SK-N-SH (cell line): ENCODE measurements at regions of chr13 and their contacts with region 1.

Region 1: GRCh38 chr13:75372517-75372916 is 109.5 kb downstream of the TBC1D4 start:
- DNase-seq: peak; percentile 42
- H3K4me3 ChIP-seq: no peak overlapping the region
- H3K27ac ChIP-seq: no peak overlapping the region
- H3K4me1 ChIP-seq: peaks cover 4 to 11% of the 10 kb centered on the region in 2 experiments
- H3K27me3 ChIP-seq: no peaks in the 10 kb centered on the region
- CTCF ChIP-seq: peak; percentile 82
- EP300 ChIP-seq: no peak
- RAD21 ChIP-seq: peak; percentile 69

Region 2: DNA sequence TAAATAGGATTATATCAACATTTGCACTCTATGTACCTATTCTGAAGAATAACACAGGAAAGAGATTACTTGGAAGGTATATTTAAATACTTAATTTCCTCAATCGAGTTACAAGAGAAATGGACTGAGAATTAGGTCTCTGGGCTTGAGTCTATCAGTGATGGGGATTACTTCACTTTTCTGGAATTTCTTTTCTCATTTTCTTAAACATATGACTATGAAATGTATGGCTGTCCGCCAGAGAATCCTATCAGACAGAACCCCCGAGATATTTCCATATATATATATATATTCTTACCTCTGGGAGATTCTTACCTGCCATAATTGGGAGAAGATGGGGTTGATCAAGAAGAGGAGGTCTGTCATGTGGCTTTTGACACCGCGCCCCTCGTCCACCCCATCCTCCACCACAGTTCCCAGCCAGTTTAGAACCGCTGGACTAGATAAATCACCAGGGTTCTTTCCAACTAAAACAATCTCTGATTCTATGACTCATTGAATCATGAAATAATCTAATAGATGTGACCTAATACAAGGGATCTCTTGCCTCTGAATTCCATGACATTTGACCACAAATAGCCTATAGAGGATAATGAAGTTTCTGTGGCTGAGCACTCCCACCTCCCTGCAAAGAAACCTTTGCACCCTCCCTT is 121.9 kb before region 1 on chr13:
- CTCF ChIA-PET with region 1: no interaction called
- POLR2A ChIA-PET with region 1: no interaction called
- DNase-seq: no peak
- H3K4me3 ChIP-seq: no peak overlapping the region
- H3K27ac ChIP-seq: peak overlapping the region in 1 of 2 experiments; percentile 75; a peak in 2 of 4 replicates
- H3K4me1 ChIP-seq: peaks cover 0 to 5% of the 10 kb centered on the region in 2 experiments; a peak in 1 of 4 replicates
- H3K27me3 ChIP-seq: peaks cover 5% of the 10 kb centered on the region; the same call in 1 of the 2 replicates
- CTCF ChIP-seq: no peak
- EP300 ChIP-seq: peak in 1 of 2 experiments; percentile 71; a peak in 2 of 4 replicates
- RAD21 ChIP-seq: no peak

Region 3: DNA sequence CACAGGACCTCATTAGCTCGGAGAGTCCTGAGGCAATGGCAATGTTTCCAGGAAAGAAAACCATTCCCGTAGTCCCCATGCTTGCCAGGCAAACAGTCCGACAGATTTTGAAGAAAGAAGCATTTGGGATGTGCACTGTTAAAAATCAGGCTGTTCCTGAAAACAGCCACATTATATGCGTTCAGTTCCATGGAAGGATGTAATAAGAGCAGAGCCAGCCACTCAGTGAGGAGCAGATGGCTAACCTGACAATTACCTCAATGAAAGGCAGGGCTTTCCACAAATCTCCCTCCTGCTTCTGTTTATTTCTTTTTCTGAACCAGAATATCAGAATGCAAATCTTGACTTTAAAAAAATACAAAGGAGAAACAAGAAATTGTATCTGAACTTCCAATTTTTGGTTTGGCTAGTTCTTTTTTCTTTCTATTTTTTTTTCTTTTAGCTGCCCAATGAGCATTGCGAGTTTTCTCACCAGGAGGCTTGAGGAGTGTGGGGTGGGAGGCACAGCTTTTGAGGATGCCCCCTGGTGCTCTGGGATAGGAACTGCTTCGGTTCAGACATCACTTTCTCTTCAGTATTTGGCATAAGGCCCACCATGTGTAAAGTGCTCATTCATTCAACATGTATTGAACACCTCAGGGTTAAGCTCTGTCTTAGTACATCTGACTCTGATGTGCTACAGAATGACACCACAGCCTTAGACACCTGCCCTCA is 14.8 kb before region 1 on chr13:
- CTCF ChIA-PET with region 1: interaction called, 19 read pairs
- POLR2A ChIA-PET with region 1: no interaction called
- DNase-seq: peak; percentile 74
- H3K4me3 ChIP-seq: no peak overlapping the region
- H3K27ac ChIP-seq: peak overlapping the region in 1 of 2 experiments; percentile 78; a peak in 1 of 4 replicates
- H3K4me1 ChIP-seq: peaks cover 2 to 11% of the 10 kb centered on the region in 2 experiments; a peak in 3 of 4 replicates
- H3K27me3 ChIP-seq: no peaks in the 10 kb centered on the region
- CTCF ChIP-seq: peak; percentile 66
- EP300 ChIP-seq: no peak
- RAD21 ChIP-seq: peak; percentile 52

Region 4: DNA sequence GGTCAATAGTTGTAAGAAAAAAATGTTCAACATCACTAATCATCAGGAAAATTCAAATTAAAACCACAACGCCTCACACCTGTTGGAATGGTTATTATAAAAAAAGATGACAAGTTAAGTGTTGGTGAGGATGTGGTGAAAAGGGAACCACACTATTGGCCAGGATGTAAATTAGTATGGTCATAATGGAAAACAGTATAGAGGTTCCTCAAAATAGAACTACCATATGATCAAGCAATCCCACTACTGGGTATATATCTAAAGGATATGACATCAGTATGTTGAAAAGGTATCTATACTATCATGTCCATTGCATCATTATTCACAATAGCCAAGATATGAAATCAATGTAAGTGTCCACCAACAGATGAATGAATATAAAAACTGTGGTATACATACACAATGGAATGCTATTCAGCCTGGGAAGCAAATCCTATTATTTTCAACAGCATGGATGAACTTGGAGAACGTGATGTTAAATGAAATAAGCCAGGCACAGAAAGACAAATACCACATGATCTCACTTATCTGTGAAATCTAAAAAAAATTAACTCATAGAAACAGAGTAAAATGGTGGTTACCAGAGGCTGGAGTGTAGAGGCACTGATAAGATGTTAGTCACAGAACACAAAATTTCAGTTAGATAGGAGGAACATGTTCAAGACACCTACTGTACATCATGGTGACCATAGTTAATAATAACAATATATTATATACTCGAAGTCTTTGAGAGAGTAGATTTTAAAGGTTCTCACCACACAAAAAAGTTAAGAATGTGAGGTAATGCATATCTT is 52.9 kb after region 1 on chr13:
- CTCF ChIA-PET with region 1: no interaction called
- POLR2A ChIA-PET with region 1: no interaction called
- DNase-seq: no peak
- H3K4me3 ChIP-seq: no peak overlapping the region
- H3K27ac ChIP-seq: no peak overlapping the region
- H3K4me1 ChIP-seq: no peaks in the 10 kb centered on the region; a peak in 1 of 4 replicates
- H3K27me3 ChIP-seq: no peaks in the 10 kb centered on the region
- CTCF ChIP-seq: no peak
- EP300 ChIP-seq: no peak
- RAD21 ChIP-seq: no peak

Region 5: GRCh38 chr13:75549262-75550158 is 177.0 kb after region 1 on chr13 and contains the start of gene UCHL3:
- CTCF ChIA-PET with region 1: interaction called, 13 read pairs
- POLR2A ChIA-PET with region 1: no interaction called
- DNase-seq: peak; percentile 95
- H3K4me3 ChIP-seq: peak within 1 kb of the TSS; percentile 72 to 85
- H3K27ac ChIP-seq: peak within 1 kb of the TSS; percentile 77 to 94
- H3K4me1 ChIP-seq: peaks cover 4 to 5% of the 10 kb centered on the region in 2 experiments; a peak in 3 of 4 replicates
- H3K27me3 ChIP-seq: no peaks in the 10 kb centered on the region
- CTCF ChIP-seq: peak; percentile 79
- EP300 ChIP-seq: peak; percentile 28 to 66; a peak in 1 of 4 replicates
- RAD21 ChIP-seq: peak; percentile 74
- polyA plus RNA-seq, gene UCHL3: 28.2 and 28.8 TPM in 2 replicates